Cardiac septum (tissue), 1 donor: ENCODE measurements at regions of chr2 and their contacts with region 1.

Region 1: DNA sequence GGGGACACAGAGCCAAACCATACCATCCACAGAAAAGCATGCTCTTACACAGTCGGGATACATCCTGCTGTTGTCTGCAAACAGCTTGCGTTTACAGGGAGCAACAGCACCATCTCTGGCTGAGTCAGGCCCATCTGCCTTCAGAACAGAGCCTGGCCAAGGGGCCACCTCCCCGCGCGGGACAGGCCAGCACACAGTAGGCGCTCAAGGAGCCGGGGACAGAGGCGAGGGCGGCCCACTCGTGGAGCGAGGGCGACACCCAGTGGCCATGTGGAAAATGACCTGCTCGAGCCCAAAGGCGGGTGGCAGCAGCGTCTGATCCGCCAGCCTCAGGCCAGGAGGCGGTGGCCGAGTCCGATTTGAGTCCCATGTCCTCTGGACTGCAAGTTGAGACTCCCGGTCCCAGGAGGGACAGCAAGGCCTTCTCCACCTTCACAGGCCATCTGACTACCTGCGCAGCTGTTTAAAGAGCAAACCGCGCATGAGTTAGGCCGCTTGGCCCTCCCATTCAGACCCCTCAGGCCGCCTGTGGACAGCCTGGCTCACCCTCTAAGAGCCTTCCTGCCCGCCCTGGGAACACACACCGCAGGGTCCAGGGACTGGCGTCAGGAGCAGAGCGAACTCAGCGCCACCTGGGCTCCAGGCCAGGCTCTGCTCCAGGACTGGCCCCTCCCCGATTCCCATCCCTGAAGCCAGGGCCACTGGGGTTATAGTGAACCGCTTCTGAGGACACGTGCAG is 38.3 kb downstream of the TTC32 start:
- DNase-seq: peak; percentile 92

Region 2: GRCh38 chr2:18435421-18436037 is 1427.9 kb before region 1 on chr2:
- intact Hi-C with region 1: loop called (anchors 5 kb)
- DNase-seq: no peak

Region 3: GRCh38 chr2:18749912-18750526 is 1113.5 kb before region 1 on chr2:
- intact Hi-C with region 1: loop called (anchors 2 kb)
- DNase-seq: no peak

Region 4: GRCh38 chr2:18971628-18972027 is 891.8 kb before region 1 on chr2:
- intact Hi-C with region 1: no loop called
- DNase-seq: no peak

Region 5: DNA sequence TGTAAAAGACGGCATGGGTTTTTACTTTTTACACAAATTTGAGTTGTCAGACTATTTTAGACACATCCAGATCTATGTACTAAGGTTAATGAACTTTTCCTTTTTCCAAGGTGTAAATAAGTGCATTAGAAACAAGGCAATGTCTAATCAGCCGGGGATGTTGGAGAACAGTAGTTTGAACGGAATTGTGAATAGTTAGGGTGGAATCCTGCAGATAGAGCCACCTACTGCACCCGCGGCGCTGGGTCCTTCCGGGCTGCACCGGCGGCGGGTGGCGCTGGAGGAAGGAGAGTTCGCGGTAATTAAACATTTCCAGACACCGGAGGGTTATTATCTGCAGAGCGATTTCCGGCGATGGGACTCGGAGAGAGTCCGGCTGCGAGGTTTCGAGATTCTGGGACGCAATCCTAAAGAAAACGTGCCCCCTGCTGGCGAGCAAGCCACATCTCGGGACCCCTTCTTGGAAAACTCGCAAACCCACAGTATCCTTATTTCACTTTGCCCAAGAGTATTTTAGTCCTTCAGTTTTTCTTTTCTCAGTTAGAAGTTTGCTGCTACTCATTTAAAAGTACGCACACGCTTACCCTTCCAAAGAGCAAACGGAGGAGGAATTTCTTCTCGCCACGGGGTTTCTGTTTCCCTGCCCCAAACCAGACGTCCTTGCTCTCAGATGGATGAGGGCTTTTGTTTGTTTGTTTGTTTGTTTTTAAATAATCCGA is 500.6 kb before region 1 on chr2:
- intact Hi-C with region 1: loop called (anchors 5 kb)
- DNase-seq: peak; percentile 85

Region 6: GRCh38 chr2:19901442-19902215 is 38.2 kb after region 1 on chr2 and contains the start of gene TTC32:
- intact Hi-C with region 1: no loop called
- DNase-seq: peak; percentile 96
- total RNA-seq, gene TTC32: 7.5 TPM